GM12878 (cell line): ENCODE measurements at regions of chr11 and their contacts with region 1.

Region 1: DNA sequence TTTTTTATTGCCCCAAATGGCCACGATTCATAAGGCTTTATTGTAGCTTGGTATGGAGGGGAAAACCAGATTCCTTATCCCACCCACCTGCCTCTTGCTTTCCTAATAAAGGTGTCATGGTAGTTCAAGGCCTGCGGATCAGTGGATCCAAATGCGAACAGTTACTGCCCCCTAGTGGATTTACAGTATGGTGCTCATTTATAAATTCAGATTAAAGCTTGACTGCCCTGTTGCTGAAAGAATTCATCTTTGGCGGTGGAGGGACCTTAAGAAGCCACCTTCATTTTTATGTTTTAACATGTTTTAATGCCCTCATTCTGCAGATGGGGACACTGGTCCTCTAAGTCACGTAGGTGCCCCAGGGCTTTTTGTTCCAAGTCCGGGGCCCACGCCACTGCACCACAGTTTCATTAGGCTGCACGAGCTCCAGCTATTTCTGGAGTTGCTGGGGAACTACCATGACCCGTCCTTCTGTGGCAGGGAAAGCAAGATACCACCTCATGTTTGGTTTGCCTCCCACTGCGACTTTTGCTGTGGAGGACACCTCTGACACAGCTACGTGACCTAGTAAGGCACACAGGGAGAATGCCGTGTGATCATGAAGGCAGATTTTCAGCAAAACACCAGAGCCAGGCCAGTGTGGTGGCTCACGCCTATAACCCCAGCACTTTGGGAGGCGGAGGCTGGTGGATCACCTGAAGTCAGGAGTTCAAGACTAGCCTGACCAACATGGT is 15.6 kb upstream of the INCENP start:
- DNase-seq: peak; percentile 11
- ATAC-seq: peak; percentile 79
- H3K4me3 ChIP-seq: no peak overlapping the region
- H3K27ac ChIP-seq: no peak overlapping the region
- H3K4me1 ChIP-seq: no peaks in the 10 kb centered on the region
- H3K27me3 ChIP-seq: no peaks in the 10 kb centered on the region
- CTCF ChIP-seq: peak; percentile 59 to 82 (median 80)
- EP300 ChIP-seq: no peak
- POLR2A ChIP-seq: no peak
- RAD21 ChIP-seq: peak; percentile 91

Region 2: GRCh38 chr11:61871158-61871597 is 237.0 kb before region 1 on chr11:
- CTCF ChIA-PET with region 1: interaction called, 22 read pairs
- POLR2A ChIA-PET with region 1: no interaction called
- RAD21 ChIA-PET with region 1: interaction called, 11 read pairs
- SMC1A ChIA-PET with region 1: interaction called, 10 read pairs
- in situ Hi-C with region 1: no loop called
- intact Hi-C with region 1: no loop called
- DNase-seq: no peak
- ATAC-seq: peak; percentile 93
- H3K4me3 ChIP-seq: no peak overlapping the region
- H3K27ac ChIP-seq: no peak overlapping the region
- H3K4me1 ChIP-seq: no peaks in the 10 kb centered on the region
- H3K27me3 ChIP-seq: no peaks in the 10 kb centered on the region; a peak in 1 of 4 replicates
- CTCF ChIP-seq: peak; percentile 85 to 94 (median 91)
- EP300 ChIP-seq: no peak
- POLR2A ChIP-seq: no peak
- RAD21 ChIP-seq: peak; percentile 82

Region 3: DNA sequence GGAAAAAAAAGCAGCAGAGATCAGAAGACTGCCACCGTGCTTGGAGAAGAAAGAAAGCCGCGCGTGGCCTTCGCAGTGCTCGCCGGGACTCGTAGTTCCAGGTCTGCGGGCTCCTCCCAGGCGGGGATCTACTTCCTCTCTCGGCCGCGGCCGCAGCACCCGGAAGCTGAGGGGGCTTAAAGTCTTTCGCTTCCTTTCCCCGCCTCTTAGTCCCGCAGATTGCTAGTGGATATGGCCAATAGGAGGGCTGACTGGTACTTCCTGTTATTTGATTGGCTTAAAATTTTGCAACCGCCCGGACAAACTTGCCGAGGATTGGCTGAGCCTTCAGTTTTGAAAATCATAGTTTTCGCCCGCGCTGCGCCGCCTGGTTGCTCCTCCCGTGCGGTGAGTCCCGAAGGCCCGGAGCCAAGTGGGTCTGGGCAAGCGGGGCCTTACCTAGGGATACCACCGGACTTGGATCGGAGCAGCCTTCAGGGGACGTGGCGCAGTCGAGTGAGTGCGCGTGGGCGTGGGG is 15.5 kb after region 1 on chr11 and contains the start of gene INCENP:
- CTCF ChIA-PET with region 1: interaction called, 11 read pairs
- POLR2A ChIA-PET with region 1: interaction called, 3 read pairs
- RAD21 ChIA-PET with region 1: interaction called, 16 read pairs
- SMC1A ChIA-PET with region 1: interaction called, 4 read pairs
- in situ Hi-C with region 1: no loop called
- intact Hi-C with region 1: no loop called
- DNase-seq: peak; percentile 96
- ATAC-seq: peak; percentile 98
- H3K4me3 ChIP-seq: peak within 1 kb of the TSS; percentile 95
- H3K27ac ChIP-seq: peak within 1 kb of the TSS; percentile 90
- H3K4me1 ChIP-seq: no peaks in the 10 kb centered on the region
- H3K27me3 ChIP-seq: no peaks in the 10 kb centered on the region
- CTCF ChIP-seq: no peak
- EP300 ChIP-seq: no peak
- POLR2A ChIP-seq: peak; percentile 75
- RAD21 ChIP-seq: no peak
- polyA plus RNA-seq, gene INCENP: 1.4 to 3.7 TPM

Region 4: GRCh38 chr11:62153617-62154016 is 45.4 kb after region 1 on chr11:
- CTCF ChIA-PET with region 1: interaction called, 12 read pairs
- POLR2A ChIA-PET with region 1: no interaction called
- RAD21 ChIA-PET with region 1: no interaction called
- SMC1A ChIA-PET with region 1: interaction called, 4 read pairs
- in situ Hi-C with region 1: no loop called
- intact Hi-C with region 1: no loop called
- DNase-seq: no peak
- ATAC-seq: no peak
- H3K4me3 ChIP-seq: no peak overlapping the region
- H3K27ac ChIP-seq: no peak overlapping the region
- H3K4me1 ChIP-seq: no peaks in the 10 kb centered on the region
- H3K27me3 ChIP-seq: no peaks in the 10 kb centered on the region
- CTCF ChIP-seq: no peak
- EP300 ChIP-seq: no peak
- POLR2A ChIP-seq: no peak
- RAD21 ChIP-seq: no peak

Region 5: GRCh38 chr11:62400760-62401159 is 292.6 kb after region 1 on chr11:
- CTCF ChIA-PET with region 1: no interaction called
- POLR2A ChIA-PET with region 1: no interaction called
- RAD21 ChIA-PET with region 1: no interaction called
- SMC1A ChIA-PET with region 1: no interaction called
- in situ Hi-C with region 1: no loop called
- intact Hi-C with region 1: no loop called
- DNase-seq: no peak
- ATAC-seq: no peak
- H3K4me3 ChIP-seq: no peak overlapping the region
- H3K27ac ChIP-seq: no peak overlapping the region
- H3K4me1 ChIP-seq: no peaks in the 10 kb centered on the region
- H3K27me3 ChIP-seq: no peaks in the 10 kb centered on the region
- CTCF ChIP-seq: no peak
- EP300 ChIP-seq: no peak
- POLR2A ChIP-seq: no peak
- RAD21 ChIP-seq: no peak